CD4-positive, alpha-beta memory T cell (primary cell): ENCODE measurements at regions of chr3 and their contacts with region 1.

Region 1: DNA sequence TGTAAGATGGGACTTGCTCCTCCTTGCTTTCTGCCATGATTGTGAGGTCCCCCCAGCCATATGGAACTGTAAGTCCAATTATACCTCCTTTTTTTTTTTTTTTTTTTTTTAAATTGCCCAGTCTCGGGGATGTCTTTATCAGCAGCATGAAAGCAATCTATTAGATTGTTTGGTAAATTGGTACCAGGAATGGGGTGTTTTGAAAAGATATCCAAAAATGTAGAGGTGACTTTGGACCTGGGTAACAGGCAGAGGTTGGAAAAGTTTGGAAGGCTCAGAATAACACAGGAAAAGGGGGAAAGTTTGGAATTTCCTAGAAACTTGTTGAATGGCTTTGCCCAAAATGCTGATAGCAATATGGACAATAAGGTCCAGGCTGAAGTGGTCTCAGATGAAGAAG is 545.8 kb upstream of the ALCAM start:
- DNase-seq: no peak
- H3K4me3 ChIP-seq: no peak overlapping the region
- H3K4me3 Mint-ChIP-seq: no peak overlapping the region
- H3K27ac ChIP-seq: no peak overlapping the region
- H3K27ac Mint-ChIP-seq: no peak overlapping the region
- H3K4me1 ChIP-seq: no peaks in the 10 kb centered on the region
- H3K4me1 Mint-ChIP-seq: no peaks in the 10 kb centered on the region
- H3K27me3 ChIP-seq: no peaks in the 10 kb centered on the region
- H3K27me3 Mint-ChIP-seq: peaks cover 0 to 2% of the 10 kb centered on the region in 2 donors

Region 2: DNA sequence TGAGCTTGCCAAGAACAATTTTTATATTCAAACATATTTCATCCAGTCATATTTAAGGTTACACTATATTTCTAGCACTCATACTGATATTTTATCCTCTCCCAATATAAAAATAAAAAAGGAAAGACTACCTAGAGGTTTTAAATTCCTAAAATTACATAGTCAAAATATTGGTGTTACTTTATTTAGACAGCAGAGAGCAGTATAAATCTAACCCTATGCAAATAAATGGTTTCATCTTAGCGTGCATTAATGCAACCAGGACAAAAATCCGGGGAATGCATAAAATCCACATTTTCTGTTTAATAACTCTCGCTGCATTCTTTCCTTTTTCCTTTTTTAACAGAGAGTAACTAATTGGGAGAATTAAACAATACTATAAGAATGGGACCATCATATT is 901.6 kb before region 1 on chr3:
- CTCF ChIA-PET with region 1: no interaction called
- POLR2A ChIA-PET with region 1: no interaction called
- intact Hi-C with region 1: loop called (anchors 5 kb)
- DNase-seq: no peak
- H3K4me3 ChIP-seq: no peak overlapping the region
- H3K4me3 Mint-ChIP-seq: no peak overlapping the region
- H3K27ac ChIP-seq: no peak overlapping the region
- H3K27ac Mint-ChIP-seq: no peak overlapping the region
- H3K4me1 ChIP-seq: no peaks in the 10 kb centered on the region
- H3K4me1 Mint-ChIP-seq: no peaks in the 10 kb centered on the region
- H3K27me3 ChIP-seq: no peaks in the 10 kb centered on the region
- H3K27me3 Mint-ChIP-seq: no peaks in the 10 kb centered on the region

Region 3: DNA sequence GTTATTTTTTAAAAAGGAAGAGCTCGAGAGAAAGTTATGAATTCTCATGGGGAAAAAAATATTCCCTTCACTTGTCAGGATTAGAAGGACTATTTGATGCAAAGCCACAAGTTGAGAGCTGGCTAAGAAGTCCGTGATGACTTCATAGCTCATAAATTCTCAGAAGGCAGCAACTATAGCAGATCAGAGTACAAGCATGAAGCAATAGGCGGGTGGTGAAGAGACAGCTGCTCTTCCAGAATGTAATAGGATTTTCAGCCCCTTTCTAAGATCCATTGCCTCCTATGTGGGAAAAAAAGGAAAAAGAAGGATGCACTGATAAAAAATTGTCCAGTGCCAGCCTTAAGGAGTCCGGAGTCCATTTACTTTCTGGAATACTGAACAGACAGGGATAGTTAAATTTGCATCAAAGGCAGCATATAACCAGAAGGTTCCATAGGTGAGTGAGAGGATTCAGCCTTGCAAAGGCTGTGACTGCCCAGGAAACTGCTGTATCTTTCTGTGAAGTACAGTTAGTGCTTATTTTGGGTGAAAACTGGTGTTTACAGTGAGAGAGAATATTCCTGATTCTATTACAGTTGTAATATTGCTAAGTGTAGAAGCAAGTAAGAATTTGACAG is 383.7 kb before region 1 on chr3:
- CTCF ChIA-PET with region 1: no interaction called
- POLR2A ChIA-PET with region 1: no interaction called
- intact Hi-C with region 1: no loop called
- DNase-seq: no peak
- H3K4me3 ChIP-seq: no peak overlapping the region
- H3K4me3 Mint-ChIP-seq: no peak overlapping the region
- H3K27ac ChIP-seq: no peak overlapping the region
- H3K27ac Mint-ChIP-seq: no peak overlapping the region
- H3K4me1 ChIP-seq: no peaks in the 10 kb centered on the region
- H3K4me1 Mint-ChIP-seq: no peaks in the 10 kb centered on the region
- H3K27me3 ChIP-seq: no peaks in the 10 kb centered on the region
- H3K27me3 Mint-ChIP-seq: peaks cover 0 to 1% of the 10 kb centered on the region in 2 donors

Region 4: DNA sequence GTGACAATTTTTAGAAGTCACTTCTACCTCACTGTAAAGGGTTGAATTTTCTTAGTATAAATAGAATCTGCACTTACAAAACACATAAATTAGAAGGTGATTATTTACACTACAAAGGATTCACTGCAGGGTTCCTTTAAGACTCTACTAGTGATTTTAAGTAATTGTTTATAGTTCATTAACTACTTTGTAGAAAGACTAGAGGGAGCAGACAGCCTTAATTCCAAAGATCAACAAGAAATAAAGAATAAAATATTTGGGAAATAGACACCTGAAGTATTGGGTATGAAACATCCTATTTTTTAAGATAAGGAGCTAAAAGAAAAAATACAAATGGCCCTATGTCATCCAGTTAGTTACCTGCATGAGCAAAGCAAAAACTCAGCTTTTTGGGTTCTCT is 185.2 kb after region 1 on chr3:
- CTCF ChIA-PET with region 1: no interaction called
- POLR2A ChIA-PET with region 1: no interaction called
- intact Hi-C with region 1: no loop called
- DNase-seq: no peak
- H3K4me3 ChIP-seq: no peak overlapping the region
- H3K4me3 Mint-ChIP-seq: no peak overlapping the region
- H3K27ac ChIP-seq: no peak overlapping the region
- H3K27ac Mint-ChIP-seq: no peak overlapping the region
- H3K4me1 ChIP-seq: no peaks in the 10 kb centered on the region
- H3K4me1 Mint-ChIP-seq: no peaks in the 10 kb centered on the region
- H3K27me3 ChIP-seq: no peaks in the 10 kb centered on the region
- H3K27me3 Mint-ChIP-seq: peaks cover 0 to 2% of the 10 kb centered on the region in 2 donors